PC-9 (cell line): ENCODE measurements at regions of chr4 and their contacts with region 1.

Region 1: DNA sequence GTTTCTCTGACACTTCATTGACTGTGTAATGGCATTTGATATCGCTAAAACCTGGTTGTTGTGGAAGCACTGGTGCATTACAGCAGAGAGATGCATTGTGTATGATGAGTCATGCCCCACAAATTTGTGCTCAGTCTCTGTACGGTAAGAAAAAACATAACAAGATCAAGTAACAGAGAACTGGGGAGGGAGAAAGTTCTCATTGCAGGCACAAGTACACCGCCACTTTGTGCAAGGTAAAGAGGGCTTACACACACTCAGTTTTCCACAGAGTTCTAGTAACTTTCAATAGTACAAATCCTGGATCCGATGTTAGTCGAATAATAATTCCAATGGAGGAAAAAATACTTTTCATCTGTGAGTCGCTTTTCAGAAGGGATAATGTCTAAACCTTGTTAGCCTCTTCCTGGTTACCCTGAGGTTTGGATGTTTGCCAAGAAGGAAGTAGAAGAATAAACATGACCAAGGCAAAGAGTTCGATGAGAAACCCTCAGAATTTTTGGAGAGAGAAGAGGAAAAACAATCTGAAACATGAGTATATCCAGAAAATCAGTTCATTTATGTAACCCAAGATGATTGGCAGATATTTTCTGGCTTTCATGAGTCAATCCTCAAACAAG is 512.5 kb upstream of the SLIT2 start:
- DNase-seq: peak; percentile 64 to 82
- H3K4me3 ChIP-seq: peak overlapping the region; percentile 27; the same call in 1 of the 2 replicates
- H3K27ac ChIP-seq: peak overlapping the region; percentile 83
- H3K4me1 ChIP-seq: 0 out of 2 replicates have a peak, but pooled peaks cover 19% of the 10 kb centered on the region
- H3K27me3 ChIP-seq: no peaks in the 10 kb centered on the region
- CTCF ChIP-seq: no peak

Region 2: DNA sequence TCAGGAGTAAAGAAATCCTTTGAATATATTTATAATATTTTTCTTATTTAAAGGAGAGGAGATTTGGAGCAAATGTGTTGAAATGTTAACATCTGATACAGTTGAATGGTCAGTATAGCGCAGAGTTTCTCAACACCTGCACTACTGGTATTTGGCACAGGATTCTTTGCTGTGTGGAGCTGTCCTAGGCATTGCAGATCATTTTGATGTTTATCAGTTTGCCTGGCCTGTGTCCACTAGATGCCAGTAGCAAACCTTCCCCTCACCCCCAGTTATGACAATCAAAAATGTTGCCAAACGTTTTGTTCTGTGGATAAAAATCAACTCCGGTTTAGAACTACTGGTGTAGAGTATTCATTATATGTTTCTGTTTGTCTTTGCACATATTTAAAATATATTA is 252.8 kb before region 1 on chr4:
- CTCF ChIA-PET with region 1: no interaction called
- POLR2A ChIA-PET with region 1: no interaction called
- intact Hi-C with region 1: loop called (anchors 5 kb)
- DNase-seq: peak; percentile 35 to 44
- H3K4me3 ChIP-seq: no peak overlapping the region
- H3K27ac ChIP-seq: no peak overlapping the region
- H3K4me1 ChIP-seq: no peaks in the 10 kb centered on the region
- H3K27me3 ChIP-seq: no peaks in the 10 kb centered on the region
- CTCF ChIP-seq: no peak

Region 3: DNA sequence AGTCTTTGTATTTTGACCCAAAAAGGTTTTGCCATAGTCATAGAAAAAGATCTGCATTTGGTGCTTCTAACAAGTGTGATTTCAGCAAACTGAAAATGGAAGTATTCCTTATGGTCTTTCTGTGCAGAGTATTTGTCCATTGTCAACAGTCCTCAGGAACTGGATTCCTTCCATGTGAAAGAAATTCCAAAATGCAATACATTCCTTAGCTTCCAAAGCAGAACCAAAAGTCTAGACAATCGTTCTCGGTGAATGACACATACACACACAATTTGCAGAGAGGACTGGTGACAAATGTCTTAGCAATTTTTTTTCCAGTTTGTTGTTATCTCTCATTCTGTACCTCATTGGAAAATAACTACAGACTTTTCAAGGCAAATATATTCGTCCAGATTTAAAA is 49.7 kb before region 1 on chr4:
- CTCF ChIA-PET with region 1: no interaction called
- POLR2A ChIA-PET with region 1: no interaction called
- intact Hi-C with region 1: loop called (anchors 1 kb)
- DNase-seq: no peak
- H3K4me3 ChIP-seq: no peak overlapping the region
- H3K27ac ChIP-seq: no peak overlapping the region
- H3K4me1 ChIP-seq: no peaks in the 10 kb centered on the region
- H3K27me3 ChIP-seq: no peaks in the 10 kb centered on the region
- CTCF ChIP-seq: no peak

Region 4: DNA sequence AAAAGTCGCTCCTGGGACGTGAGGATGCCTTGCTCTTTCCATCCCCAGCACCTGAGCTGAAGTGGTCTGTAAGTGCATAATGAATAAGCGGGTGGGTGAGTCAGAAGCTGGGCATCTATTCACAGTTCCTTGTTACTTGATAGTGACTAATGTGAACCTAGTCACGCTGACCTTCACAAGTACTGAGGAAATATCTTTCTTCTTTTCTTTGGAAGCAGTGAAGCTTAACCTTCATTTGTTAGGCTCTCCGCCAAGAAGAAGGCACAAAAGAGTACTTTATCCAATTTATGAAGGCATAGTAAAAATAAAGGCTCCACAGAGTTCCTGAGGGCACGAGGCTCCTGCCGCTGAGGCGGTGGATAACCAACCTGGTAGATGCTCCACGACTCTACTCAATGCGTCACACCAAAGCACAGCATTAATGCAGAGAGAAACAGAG is 36.8 kb after region 1 on chr4:
- CTCF ChIA-PET with region 1: no interaction called
- POLR2A ChIA-PET with region 1: no interaction called
- intact Hi-C with region 1: loop called (anchors 1 kb)
- DNase-seq: peak; percentile 68 to 87
- H3K4me3 ChIP-seq: no peak overlapping the region
- H3K27ac ChIP-seq: peak overlapping the region; percentile 51; the same call in 1 of the 2 replicates
- H3K4me1 ChIP-seq: peaks cover 3% of the 10 kb centered on the region; the same call in 1 of the 2 replicates
- H3K27me3 ChIP-seq: no peaks in the 10 kb centered on the region
- CTCF ChIP-seq: no peak

Region 5: DNA sequence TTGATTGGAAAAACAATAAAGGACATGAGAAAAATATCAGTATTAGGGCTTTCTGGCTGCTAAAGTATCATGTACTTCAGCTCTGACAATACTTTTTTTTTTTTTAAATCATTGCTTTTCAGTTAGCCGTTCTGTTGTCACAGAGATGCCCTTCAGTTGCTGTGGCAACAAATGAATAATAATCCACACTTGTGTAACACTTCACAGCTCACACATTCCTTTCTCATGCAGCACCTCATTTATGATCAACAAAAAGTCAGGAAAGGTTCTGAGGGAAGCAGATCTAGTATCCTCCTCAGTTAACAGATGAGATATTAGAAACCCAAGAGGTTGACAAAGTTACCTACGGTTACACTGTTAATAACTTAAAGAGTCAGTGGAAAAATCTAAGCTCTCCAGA is 68.3 kb after region 1 on chr4:
- CTCF ChIA-PET with region 1: no interaction called
- POLR2A ChIA-PET with region 1: no interaction called
- intact Hi-C with region 1: loop called (anchors 2 kb)
- DNase-seq: peak in 1 of 2 experiments; percentile 66
- H3K4me3 ChIP-seq: no peak overlapping the region
- H3K27ac ChIP-seq: no peak overlapping the region
- H3K4me1 ChIP-seq: no peaks in the 10 kb centered on the region
- H3K27me3 ChIP-seq: no peaks in the 10 kb centered on the region
- CTCF ChIP-seq: no peak

Region 6: GRCh38 chr4:19831644-19832285 is 92.6 kb after region 1 on chr4:
- CTCF ChIA-PET with region 1: no interaction called
- POLR2A ChIA-PET with region 1: no interaction called
- intact Hi-C with region 1: no loop called
- DNase-seq: no peak
- H3K4me3 ChIP-seq: no peak overlapping the region
- H3K27ac ChIP-seq: no peak overlapping the region
- H3K4me1 ChIP-seq: no peaks in the 10 kb centered on the region
- H3K27me3 ChIP-seq: no peaks in the 10 kb centered on the region
- CTCF ChIP-seq: no peak

Region 7: DNA sequence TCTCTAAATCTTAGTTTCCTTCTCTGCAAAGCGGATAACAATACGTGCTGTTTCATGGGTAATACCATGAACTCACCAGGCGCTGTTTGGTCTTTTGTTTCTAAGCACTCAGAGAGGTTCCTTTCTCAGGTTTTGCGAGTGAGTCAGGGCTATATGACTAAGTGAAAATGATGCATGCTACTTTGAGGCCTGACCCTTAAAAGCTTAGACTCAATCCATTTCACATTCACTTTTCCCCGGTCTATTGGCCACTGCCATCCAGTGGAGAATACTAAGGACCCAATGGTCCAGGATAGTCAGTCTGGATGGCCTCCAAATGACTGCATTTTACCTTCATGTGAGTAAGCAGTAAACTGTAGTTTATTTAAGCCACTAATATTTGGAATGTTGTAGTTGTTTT is 111.7 kb after region 1 on chr4:
- CTCF ChIA-PET with region 1: no interaction called
- POLR2A ChIA-PET with region 1: no interaction called
- intact Hi-C with region 1: loop called (anchors 1 kb)
- DNase-seq: peak in 1 of 2 experiments; percentile 16
- H3K4me3 ChIP-seq: no peak overlapping the region
- H3K27ac ChIP-seq: no peak overlapping the region
- H3K4me1 ChIP-seq: no peaks in the 10 kb centered on the region
- H3K27me3 ChIP-seq: no peaks in the 10 kb centered on the region
- CTCF ChIP-seq: no peak

Region 8: GRCh38 chr4:19983072-19983471 is 243.9 kb after region 1 on chr4:
- CTCF ChIA-PET with region 1: no interaction called
- POLR2A ChIA-PET with region 1: no interaction called
- intact Hi-C with region 1: loop called (anchors 1 kb)
- DNase-seq: no peak
- H3K4me3 ChIP-seq: no peak overlapping the region
- H3K27ac ChIP-seq: no peak overlapping the region
- H3K4me1 ChIP-seq: no peaks in the 10 kb centered on the region
- H3K27me3 ChIP-seq: no peaks in the 10 kb centered on the region
- CTCF ChIP-seq: no peak